Breast epithelium (tissue), 4 donors: ENCODE measurements at regions of chr1 and their contacts with region 1.

Region 1: DNA sequence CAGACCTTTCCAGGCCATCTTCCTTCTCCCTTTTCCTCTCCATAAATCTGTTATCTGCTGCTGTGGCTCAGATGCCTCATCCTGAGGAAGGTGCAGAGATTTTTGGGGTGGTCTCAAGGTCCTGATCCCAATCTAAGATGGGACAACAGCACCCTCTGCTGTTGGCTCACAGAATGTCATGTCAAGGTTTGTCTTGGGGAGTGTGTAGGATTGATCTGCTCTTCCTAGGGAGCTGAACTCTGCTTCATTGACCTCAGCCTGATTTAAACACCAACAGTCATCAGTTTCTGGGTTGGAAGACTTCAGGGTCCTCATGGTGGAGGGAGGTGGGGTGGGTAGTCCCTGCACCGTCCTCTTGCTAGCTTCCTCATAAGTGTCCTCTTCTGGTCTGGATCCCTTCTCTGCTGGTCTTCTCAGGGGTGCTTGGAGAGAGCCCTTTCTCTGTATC is 62.8 kb upstream of the LAX1 start:
- DNase-seq: peak in 1 of 2 donors; percentile 29
- H3K4me3 ChIP-seq: no peak overlapping the region
- H3K27ac ChIP-seq: no peak overlapping the region
- H3K4me1 ChIP-seq: no peaks in the 10 kb centered on the region
- H3K27me3 ChIP-seq: no peaks in the 10 kb centered on the region
- CTCF ChIP-seq: peak; percentile 85 to 97 (median 94)
- POLR2A ChIP-seq: no peak

Region 2: GRCh38 chr1:203504397-203505250 is 197.5 kb before region 1 on chr1:
- intact Hi-C with region 1: loop called (anchors 5 kb)
- DNase-seq: peak; percentile 80 to 84
- H3K4me3 ChIP-seq: no peak overlapping the region
- H3K27ac ChIP-seq: no peak overlapping the region
- H3K4me1 ChIP-seq: peaks cover 0 to 8% of the 10 kb centered on the region in 2 donors
- H3K27me3 ChIP-seq: no peaks in the 10 kb centered on the region
- CTCF ChIP-seq: peak; percentile 84 to 91 (median 87)
- POLR2A ChIP-seq: no peak

Region 3: DNA sequence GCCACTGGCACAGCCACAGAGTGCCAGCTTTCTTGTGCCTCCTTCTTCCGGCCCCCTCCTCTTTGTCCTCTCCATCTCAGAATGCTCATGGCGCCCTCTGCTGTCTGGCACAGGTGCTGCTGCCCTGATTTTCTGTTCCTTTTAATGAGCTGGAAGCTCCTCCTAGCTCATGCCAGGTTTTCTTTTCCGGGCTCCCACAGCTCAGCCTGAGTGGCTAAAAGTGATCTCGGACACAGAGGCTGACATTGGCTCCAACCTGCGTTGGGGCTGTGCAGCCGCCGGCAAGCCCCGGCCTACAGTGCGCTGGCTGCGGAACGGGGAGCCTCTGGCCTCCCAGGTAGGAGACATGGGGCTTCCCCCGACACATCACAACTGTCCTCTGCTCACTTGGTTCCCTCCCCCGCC is 1359.5 kb after region 1 on chr1:
- intact Hi-C with region 1: loop called (anchors 5 kb)
- DNase-seq: peak; percentile 66 to 77
- H3K4me3 ChIP-seq: no peak overlapping the region
- H3K27ac ChIP-seq: no peak overlapping the region
- H3K4me1 ChIP-seq: no peaks in the 10 kb centered on the region
- H3K27me3 ChIP-seq: no peaks in the 10 kb centered on the region
- CTCF ChIP-seq: peak; percentile 68 to 92 (median 80)
- POLR2A ChIP-seq: no peak